SK-N-SH (cell line): ENCODE measurements at regions of chr20 and their contacts with region 1.

Region 1: GRCh38 chr20:45771182-45771759 is 20.4 kb downstream of the WFDC3 start:
- DNase-seq: peak; percentile 70
- H3K4me3 ChIP-seq: peak overlapping the region in 1 of 2 experiments; percentile 38; a peak in 1 of 4 replicates
- H3K27ac ChIP-seq: no peak overlapping the region
- H3K4me1 ChIP-seq: peaks cover 0 to 3% of the 10 kb centered on the region in 2 experiments; a peak in 2 of 4 replicates
- H3K27me3 ChIP-seq: no peaks in the 10 kb centered on the region
- CTCF ChIP-seq: peak; percentile 97
- EP300 ChIP-seq: no peak
- RAD21 ChIP-seq: peak; percentile 95

Region 2: GRCh38 chr20:45293041-45294002 is 477.9 kb before region 1 on chr20:
- CTCF ChIA-PET with region 1: interaction called, 39 read pairs
- POLR2A ChIA-PET with region 1: no interaction called
- DNase-seq: peak; percentile 92
- H3K4me3 ChIP-seq: peak overlapping the region; percentile 46 to 72
- H3K27ac ChIP-seq: no peak overlapping the region
- H3K4me1 ChIP-seq: peaks cover 0 to 3% of the 10 kb centered on the region in 2 experiments; a peak in 1 of 4 replicates
- H3K27me3 ChIP-seq: no peaks in the 10 kb centered on the region
- CTCF ChIP-seq: peak; percentile 83
- EP300 ChIP-seq: no peak
- RAD21 ChIP-seq: peak; percentile 31

Region 3: DNA sequence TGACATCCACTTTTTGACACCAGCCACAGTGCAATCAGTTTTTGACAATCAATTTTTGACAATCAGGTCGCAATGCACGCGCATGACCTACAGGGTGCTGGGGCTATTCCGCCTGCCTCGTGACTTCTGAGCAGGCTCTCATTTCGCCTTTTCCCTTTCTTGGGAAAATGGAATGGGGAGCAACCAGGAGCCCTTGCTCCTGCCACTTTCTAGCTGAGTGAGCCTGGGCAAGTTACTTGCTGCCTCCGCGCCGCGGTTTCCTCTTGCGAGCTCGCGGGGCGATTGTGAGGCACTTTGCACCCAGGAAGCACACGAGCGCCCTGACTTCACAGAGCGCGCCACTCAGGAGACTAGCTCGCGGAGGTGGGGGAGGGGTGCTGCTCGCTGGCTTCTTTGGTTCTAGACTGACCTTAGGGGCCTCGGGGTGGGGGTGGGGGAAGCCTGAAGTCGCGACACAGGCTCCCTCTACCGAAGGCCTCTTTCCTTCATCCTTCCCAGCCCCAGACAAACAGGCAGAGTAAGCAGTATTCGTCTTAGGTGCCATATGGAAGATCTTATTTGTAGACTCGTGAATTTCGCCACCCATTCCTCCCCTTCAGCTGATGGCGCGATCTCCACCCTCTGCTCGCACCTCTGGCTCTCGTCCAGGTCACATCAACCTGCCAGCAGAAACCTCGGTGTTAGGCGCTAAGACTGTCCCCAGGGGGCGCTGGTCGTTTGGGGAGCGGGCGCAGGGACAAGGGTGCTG is 397.7 kb before region 1 on chr20:
- CTCF ChIA-PET with region 1: interaction called, 10 read pairs
- POLR2A ChIA-PET with region 1: no interaction called
- DNase-seq: peak; percentile 83
- H3K4me3 ChIP-seq: no peak overlapping the region
- H3K27ac ChIP-seq: no peak overlapping the region
- H3K4me1 ChIP-seq: no peaks in the 10 kb centered on the region
- H3K27me3 ChIP-seq: no peaks in the 10 kb centered on the region
- CTCF ChIP-seq: peak; percentile 76
- EP300 ChIP-seq: no peak
- RAD21 ChIP-seq: peak; percentile 74

Region 4: GRCh38 chr20:45456632-45457031 is 314.6 kb before region 1 on chr20:
- CTCF ChIA-PET with region 1: interaction called, 67 read pairs
- POLR2A ChIA-PET with region 1: no interaction called
- DNase-seq: no peak
- H3K4me3 ChIP-seq: no peak overlapping the region
- H3K27ac ChIP-seq: no peak overlapping the region
- H3K4me1 ChIP-seq: no peaks in the 10 kb centered on the region
- H3K27me3 ChIP-seq: peaks cover 28% of the 10 kb centered on the region; the same call in 1 of the 2 replicates
- CTCF ChIP-seq: peak; percentile 36; the same call in 1 of the 2 replicates
- EP300 ChIP-seq: no peak
- RAD21 ChIP-seq: no peak

Region 5: GRCh38 chr20:45629496-45630100 is 141.7 kb before region 1 on chr20 and contains the start of gene WFDC10A:
- CTCF ChIA-PET with region 1: interaction called, 21 read pairs
- POLR2A ChIA-PET with region 1: no interaction called
- DNase-seq: peak; percentile 41
- H3K4me3 ChIP-seq: no peak within 1 kb of the TSS; a peak in 1 of 4 replicates
- H3K27ac ChIP-seq: no peak within 1 kb of the TSS
- H3K4me1 ChIP-seq: no peaks in the 10 kb centered on the region; a peak in 1 of 4 replicates
- H3K27me3 ChIP-seq: no peaks in the 10 kb centered on the region
- CTCF ChIP-seq: peak; percentile 69
- EP300 ChIP-seq: no peak
- RAD21 ChIP-seq: peak; percentile 44
- polyA plus RNA-seq, gene WFDC10A: not detected in 2 replicates

Region 6: DNA sequence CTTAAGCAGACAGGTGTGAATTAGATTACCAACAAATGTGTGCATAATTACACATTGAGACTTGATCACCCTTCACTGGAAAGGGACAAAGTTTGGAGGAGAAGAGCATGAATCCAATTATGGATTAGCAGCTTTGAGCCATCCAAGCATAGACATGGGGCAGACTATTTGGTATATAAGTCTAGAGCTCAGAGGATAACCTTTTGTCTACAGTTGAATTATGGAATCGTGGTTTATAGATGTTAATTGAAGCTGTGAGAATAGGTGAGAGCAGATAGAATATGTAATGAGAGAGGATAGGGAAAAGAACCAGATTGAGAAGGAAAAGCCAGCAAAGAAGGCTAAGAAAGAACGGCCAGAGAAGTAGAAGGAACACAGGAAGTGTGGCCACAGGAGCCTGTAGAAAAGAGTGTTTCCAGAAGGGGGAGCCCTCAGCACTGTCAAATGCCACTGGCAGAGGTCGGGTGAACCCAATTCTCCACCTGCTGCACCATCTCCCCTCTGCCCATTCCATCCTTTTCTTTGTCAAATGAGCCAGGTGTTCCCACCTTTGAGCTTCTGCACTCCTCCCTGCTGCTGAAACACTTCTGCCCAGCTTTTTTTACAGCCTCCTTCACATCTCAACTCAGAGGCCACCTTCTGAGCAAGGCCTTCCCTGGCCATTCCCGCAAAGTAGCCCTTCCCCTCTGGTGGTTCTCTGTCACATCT is 27.8 kb after region 1 on chr20:
- CTCF ChIA-PET with region 1: interaction called, 12 read pairs
- POLR2A ChIA-PET with region 1: no interaction called
- DNase-seq: peak; percentile 71
- H3K4me3 ChIP-seq: no peak overlapping the region
- H3K27ac ChIP-seq: peak overlapping the region in 1 of 2 experiments; percentile 1; a peak in 1 of 4 replicates
- H3K4me1 ChIP-seq: no peaks in the 10 kb centered on the region
- H3K27me3 ChIP-seq: no peaks in the 10 kb centered on the region
- CTCF ChIP-seq: peak; percentile 76
- EP300 ChIP-seq: no peak
- RAD21 ChIP-seq: peak; percentile 76